Posterior vena cava (tissue), 2 donors: ENCODE measurements at regions of chr11 and their contacts with region 1.

Region 1: GRCh38 chr11:131595812-131596211 is 225.4 kb downstream of the NTM start:
- DNase-seq: no peak

Region 2: DNA sequence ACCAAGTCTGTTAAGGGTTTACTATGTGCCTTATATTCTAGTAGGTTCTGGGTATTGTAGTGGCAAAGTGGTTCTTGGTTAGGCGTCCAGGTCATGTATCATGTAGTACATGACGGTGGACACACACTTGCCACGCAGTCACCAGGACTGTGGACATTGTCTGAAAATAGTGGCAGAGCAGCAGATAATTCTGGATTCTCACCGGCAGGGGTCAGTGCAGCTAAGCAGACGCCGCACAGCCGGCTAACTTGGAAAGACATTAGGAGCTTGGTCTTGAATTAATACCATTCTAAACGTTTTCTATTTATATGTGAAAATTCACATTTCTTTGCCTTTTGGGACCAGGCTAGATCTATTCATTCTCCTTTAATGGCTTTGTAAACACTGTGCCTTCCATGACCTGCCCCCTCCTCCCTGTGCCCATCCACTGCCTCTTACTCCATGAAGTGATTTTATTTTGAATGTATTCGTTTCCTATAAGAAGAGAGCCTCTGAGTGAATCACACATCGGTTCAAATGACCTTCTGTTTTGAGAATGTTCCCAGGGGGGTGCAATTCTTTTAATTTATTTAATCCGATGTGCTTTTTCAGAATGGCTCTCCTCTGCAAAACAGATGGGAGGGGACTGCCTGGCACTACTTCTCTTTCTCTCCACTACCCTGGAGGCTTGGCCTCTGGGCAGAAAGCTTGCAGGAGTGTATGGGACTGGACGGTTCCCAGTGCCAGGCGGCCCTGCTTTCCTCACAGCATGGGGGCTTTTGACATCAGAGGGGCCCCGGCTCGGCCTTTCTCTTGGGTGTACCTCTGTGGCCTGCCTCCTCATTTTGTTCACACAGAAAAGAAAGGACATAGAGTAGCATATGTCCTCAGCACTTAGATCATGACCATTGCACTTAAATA is 152.6 kb after region 1 on chr11:
- intact Hi-C with region 1: no loop called
- DNase-seq: peak; percentile 89

Region 3: GRCh38 chr11:133347988-133348387 is 1752.2 kb after region 1 on chr11:
- intact Hi-C with region 1: loop called in 1 of 2 experiments (anchors 5 kb)
- DNase-seq: no peak